ENCODE measurements at regions of chr14 and their contacts with region 1.

Region 1: GRCh38 chr14:104826189-104826860 is 25.4 kb downstream of the ZBTB42 start:
- DNase-seq: peak; percentile 93
- ATAC-seq: peak; percentile 54
- H3K4me3 Mint-ChIP-seq: peak overlapping the region; percentile 80
- H3K27ac Mint-ChIP-seq: no peak overlapping the region
- H3K4me1 Mint-ChIP-seq: peaks cover 11% of the 10 kb centered on the region; the same call in 1 of the 2 replicates
- H3K27me3 Mint-ChIP-seq: peaks cover 34% of the 10 kb centered on the region
- CTCF ChIP-seq: peak; percentile 85

Region 2: DNA sequence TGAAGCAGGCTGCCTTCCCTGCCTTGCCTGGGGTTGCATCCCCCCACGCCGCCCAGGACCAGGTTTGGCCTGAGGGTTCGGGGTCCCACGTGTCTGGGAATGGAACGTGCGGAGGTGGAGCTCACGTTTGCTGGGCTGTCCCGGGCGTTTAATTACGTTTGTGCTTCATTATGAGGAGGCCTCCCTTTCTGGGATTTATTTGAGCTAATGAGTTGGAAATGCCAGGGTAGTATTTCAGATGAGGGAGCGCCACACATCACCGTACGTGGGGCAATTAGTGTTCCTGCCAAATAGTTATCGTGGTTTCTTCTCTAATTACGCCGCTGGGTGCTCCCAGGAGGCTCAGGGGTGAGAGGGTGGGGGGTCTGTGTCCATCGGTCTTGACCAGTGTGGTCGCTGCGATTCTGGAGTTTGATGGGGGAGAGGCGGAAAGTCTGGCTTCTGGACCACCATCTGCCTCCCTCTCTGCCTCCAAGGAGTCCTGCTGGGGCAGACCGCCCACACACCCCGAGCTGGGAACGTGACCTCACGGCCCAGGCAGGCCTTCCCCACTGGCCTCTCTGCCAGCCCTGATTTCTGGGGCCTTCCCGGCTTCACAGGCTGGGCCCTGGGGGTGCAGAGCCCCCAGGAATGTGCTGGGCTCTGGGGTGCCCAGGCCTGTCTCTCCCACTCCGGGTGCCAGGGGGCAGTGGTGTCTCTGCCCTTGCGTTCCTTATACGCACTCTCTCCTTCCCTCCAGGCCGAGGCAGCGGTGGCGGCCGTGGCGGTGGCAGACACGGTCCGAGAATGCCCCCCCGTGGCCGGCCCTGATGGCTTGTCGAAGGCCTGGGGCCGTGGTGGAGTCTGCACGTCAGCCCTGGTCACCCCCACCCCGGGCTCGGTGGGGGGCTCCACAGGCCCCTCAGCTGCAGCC is 669.1 kb before region 1 on chr14:
- CTCF ChIA-PET with region 1: no interaction called
- POLR2A ChIA-PET with region 1: no interaction called
- DNase-seq: peak; percentile 45
- ATAC-seq: peak; percentile 43; the same call in 1 of the 2 replicates
- H3K4me3 Mint-ChIP-seq: no peak overlapping the region
- H3K27ac Mint-ChIP-seq: no peak overlapping the region
- H3K4me1 Mint-ChIP-seq: no peaks in the 10 kb centered on the region
- H3K27me3 Mint-ChIP-seq: no peaks in the 10 kb centered on the region
- CTCF ChIP-seq: no peak

Region 3: DNA sequence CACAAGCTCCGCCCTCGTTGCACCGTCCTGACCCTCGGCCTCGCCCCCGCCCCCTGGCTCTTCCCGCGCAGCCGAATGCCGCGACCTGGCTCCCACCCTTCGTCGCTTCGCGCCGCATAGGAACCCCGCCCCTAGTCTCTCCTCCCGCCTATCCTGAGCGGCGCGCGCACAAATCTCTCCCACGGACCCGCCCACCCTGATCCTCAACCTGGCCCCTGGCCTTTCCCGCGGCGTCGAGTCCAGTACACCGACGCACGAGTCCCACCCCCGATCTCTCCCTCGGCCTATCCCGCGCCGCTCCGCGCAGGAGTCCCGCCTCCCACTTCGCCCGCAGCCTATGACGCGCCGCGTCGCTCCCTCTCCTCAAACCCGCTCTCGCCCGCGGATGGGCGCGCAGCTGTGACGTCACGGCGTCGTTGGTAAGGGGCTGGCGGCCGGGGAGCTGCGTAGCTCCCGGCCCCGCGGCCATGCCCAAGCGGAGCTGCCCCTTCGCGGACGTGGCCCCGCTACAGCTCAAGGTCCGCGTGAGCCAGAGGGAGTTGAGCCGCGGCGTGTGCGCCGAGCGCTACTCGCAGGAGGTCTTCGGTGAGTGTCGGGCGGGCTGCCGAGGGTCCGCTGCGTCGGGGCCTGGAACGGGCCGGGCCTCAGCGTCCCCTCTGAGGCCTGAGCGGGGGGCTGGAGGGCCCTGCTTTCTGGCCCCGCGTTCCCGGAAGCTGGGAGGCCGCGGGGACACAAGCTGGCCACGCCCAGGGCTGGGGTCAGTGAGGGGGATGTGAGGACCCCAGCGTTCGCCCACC is 73.4 kb before region 1 on chr14 and contains the start of gene SIVA1:
- CTCF ChIA-PET with region 1: interaction called, 38 read pairs
- POLR2A ChIA-PET with region 1: interaction called, 5 read pairs
- DNase-seq: peak; percentile 100
- ATAC-seq: peak; percentile 95
- H3K4me3 Mint-ChIP-seq: peak within 1 kb of the TSS; percentile 95
- H3K27ac Mint-ChIP-seq: peak within 1 kb of the TSS; percentile 77
- H3K4me1 Mint-ChIP-seq: peaks cover 11% of the 10 kb centered on the region
- H3K27me3 Mint-ChIP-seq: peaks cover 14% of the 10 kb centered on the region
- CTCF ChIP-seq: no peak
- total RNA-seq, gene SIVA1: 113 to 128 TPM (median 124 TPM) in 3 replicates

Region 4: GRCh38 chr14:104777486-104778249 is 48.7 kb before region 1 on chr14:
- CTCF ChIA-PET with region 1: interaction called, 13 read pairs
- POLR2A ChIA-PET with region 1: no interaction called
- DNase-seq: peak; percentile 43
- ATAC-seq: peak; percentile 35
- H3K4me3 Mint-ChIP-seq: no peak overlapping the region
- H3K27ac Mint-ChIP-seq: no peak overlapping the region
- H3K4me1 Mint-ChIP-seq: no peaks in the 10 kb centered on the region
- H3K27me3 Mint-ChIP-seq: no peaks in the 10 kb centered on the region
- CTCF ChIP-seq: no peak

Region 5: GRCh38 chr14:104843442-104844305 is 17.3 kb after region 1 on chr14:
- CTCF ChIA-PET with region 1: interaction called, 68 read pairs
- POLR2A ChIA-PET with region 1: interaction called, 7 read pairs
- DNase-seq: peak; percentile 77
- ATAC-seq: peak; percentile 78
- H3K4me3 Mint-ChIP-seq: peak overlapping the region; percentile 75
- H3K27ac Mint-ChIP-seq: peak overlapping the region; percentile 68; the same call in 1 of the 2 replicates
- H3K4me1 Mint-ChIP-seq: peaks cover 13% of the 10 kb centered on the region
- H3K27me3 Mint-ChIP-seq: peaks cover 78% of the 10 kb centered on the region
- CTCF ChIP-seq: no peak

Region 6: DNA sequence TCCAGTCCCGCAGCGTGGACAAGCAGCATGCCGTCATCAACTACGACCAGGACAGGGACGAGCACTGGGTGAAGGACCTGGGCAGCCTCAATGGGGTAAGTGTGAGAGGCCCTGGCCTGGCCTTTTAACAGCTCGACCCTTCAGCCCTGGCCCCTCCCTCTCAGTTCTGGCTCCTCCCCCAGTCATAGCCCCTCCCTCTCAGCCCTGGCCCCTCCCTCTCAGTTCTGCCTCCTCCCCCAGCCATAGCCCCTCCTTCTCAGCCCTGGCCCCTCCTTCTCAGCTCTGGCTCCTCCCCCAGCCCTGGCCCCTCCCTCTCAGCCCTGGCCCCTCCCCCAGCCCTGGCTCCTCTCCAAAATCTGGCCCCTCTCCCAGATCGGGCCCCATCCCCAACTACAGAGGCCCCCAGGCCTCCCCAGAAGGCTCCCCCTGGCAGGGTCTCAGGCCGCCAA is 50.0 kb after region 1 on chr14:
- CTCF ChIA-PET with region 1: interaction called, 24 read pairs
- POLR2A ChIA-PET with region 1: no interaction called
- DNase-seq: peak; percentile 80
- ATAC-seq: peak; percentile 92
- H3K4me3 Mint-ChIP-seq: no peak overlapping the region
- H3K27ac Mint-ChIP-seq: no peak overlapping the region
- H3K4me1 Mint-ChIP-seq: peaks cover 13% of the 10 kb centered on the region
- H3K27me3 Mint-ChIP-seq: no peaks in the 10 kb centered on the region
- CTCF ChIP-seq: no peak

Region 7: GRCh38 chr14:105045710-105046326 is 219.5 kb after region 1 on chr14:
- CTCF ChIA-PET with region 1: interaction called, 17 read pairs
- POLR2A ChIA-PET with region 1: no interaction called
- DNase-seq: peak; percentile 96
- ATAC-seq: peak; percentile 92
- H3K4me3 Mint-ChIP-seq: no peak overlapping the region
- H3K27ac Mint-ChIP-seq: no peak overlapping the region
- H3K4me1 Mint-ChIP-seq: no peaks in the 10 kb centered on the region
- H3K27me3 Mint-ChIP-seq: peaks cover 20% of the 10 kb centered on the region
- CTCF ChIP-seq: peak; percentile 100

Measured in WTC11 (cell line).